ENCODE measurements at regions of chr5 and their contacts with region 1.

Region 1: GRCh38 chr5:112935675-112936074 is 13.6 kb upstream of the REEP5 start:
- DNase-seq: peak; percentile 19
- ATAC-seq: peak; percentile 51
- H3K4me3 ChIP-seq: no peak overlapping the region
- H3K27ac ChIP-seq: no peak overlapping the region
- H3K4me1 ChIP-seq: peaks cover 5% of the 10 kb centered on the region
- H3K27me3 ChIP-seq: no peaks in the 10 kb centered on the region
- CTCF ChIP-seq: no peak

Region 2: GRCh38 chr5:112885001-112885400 is 50.7 kb before region 1 on chr5:
- CTCF ChIA-PET with region 1: no interaction called
- POLR2A ChIA-PET with region 1: no interaction called
- intact Hi-C with region 1: no loop called
- DNase-seq: no peak
- ATAC-seq: no peak
- H3K4me3 ChIP-seq: no peak overlapping the region
- H3K27ac ChIP-seq: no peak overlapping the region
- H3K4me1 ChIP-seq: no peaks in the 10 kb centered on the region
- H3K27me3 ChIP-seq: no peaks in the 10 kb centered on the region
- CTCF ChIP-seq: no peak

Region 3: DNA sequence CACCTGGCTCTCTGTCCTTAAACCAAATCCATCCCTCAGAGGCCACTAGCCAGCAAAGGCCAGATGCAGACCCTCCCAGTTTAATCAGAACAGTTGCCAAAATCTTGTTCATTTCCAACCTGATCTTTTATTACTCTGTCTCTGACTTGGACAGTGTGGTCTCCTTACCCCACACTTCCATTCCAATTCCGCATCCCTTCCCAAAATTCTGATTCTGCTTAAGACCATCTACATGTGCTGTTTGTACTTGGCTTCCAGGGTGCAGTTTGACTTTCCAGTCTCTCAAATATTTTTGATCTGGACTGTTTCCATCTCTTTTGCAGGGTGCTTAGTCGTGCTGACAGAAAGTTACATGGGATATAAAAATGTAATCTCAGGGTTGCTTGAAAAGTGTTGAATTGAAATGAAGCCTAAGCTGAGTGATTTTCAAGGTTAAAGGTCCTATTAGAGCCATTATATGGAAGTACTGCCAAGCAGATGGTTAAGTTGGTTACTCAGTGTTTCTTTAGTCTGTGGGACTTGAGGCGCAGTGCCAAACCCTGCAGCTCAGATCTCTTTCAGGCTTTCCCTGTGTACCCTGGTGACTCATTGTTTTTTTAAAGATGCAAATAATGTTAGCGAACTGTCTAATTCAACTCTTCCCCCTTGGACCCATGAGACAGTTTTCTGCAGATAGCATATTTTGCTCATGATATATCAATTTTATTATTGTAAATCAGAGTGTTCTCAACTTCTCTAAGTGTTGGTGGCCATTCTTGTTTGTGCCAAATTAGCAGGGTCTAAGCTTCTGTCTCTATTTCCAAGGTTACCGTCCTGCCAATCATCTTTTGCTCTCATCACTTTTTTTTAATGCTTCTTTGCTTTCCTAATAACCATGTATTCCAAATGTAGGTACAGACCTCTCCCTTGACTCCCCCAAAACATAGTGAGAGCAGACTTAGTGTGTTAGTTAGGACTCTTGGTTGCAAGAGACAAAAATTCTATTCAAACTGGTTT is 22.7 kb after region 1 on chr5:
- CTCF ChIA-PET with region 1: no interaction called
- POLR2A ChIA-PET with region 1: no interaction called
- intact Hi-C with region 1: loop called (anchors 2 kb)
- DNase-seq: peak; percentile 96
- ATAC-seq: peak; percentile 86
- H3K4me3 ChIP-seq: peak overlapping the region; percentile 48
- H3K27ac ChIP-seq: peak overlapping the region; percentile 83
- H3K4me1 ChIP-seq: peaks cover 49% of the 10 kb centered on the region
- H3K27me3 ChIP-seq: no peaks in the 10 kb centered on the region
- CTCF ChIP-seq: no peak

Measured in PC-3 (cell line).